GM10248 (cell line): ENCODE measurements at regions of chr18 and their contacts with region 1.

Region 1: DNA sequence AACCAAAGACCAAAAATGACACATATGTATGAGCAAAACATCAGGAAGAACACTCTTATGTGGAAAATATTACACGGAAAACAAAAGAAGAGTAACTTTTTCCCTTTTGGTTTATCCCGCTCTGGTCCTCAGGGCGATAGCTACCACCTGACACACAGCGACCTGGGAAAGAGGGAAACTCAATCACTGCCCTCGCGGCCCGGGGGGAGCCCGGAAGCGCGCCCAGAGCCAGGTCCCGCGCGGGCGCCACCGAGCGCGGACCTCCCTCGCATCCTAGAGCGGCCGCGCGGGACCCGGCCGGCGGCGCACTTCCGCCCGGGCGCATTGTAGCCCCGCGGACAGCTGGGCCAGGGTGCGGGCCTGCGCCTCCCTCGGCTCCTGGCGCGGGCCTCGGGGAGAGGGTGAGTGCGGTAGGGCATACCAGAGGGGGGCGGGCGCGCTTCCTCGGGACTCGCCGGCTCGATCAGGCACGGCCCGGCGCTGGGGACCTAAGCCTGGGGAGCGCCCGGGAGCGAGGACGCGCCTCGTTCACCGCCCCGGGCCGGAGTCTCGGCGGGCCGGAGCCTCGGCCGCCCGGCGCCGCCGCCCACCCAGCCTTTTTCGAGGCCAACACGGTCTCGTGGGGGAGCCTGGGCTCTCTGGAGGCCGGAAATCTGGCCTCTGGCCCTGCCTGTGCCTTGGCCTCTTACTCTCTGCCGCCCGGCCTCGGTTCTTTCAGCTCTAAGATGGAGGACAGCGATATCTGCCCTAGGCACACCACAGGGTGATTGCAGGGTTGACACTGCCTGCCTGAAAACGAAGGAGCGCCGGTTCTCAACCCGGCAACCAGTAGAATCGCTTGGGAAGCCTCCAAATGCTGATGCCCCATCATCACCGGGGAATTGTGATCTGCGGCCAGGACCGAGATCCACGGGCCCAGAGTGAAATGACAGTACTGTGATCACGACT is at the start of gene ELAC1:
- DNase-seq: peak; percentile 90
- CTCF ChIP-seq: no peak

Region 2: DNA sequence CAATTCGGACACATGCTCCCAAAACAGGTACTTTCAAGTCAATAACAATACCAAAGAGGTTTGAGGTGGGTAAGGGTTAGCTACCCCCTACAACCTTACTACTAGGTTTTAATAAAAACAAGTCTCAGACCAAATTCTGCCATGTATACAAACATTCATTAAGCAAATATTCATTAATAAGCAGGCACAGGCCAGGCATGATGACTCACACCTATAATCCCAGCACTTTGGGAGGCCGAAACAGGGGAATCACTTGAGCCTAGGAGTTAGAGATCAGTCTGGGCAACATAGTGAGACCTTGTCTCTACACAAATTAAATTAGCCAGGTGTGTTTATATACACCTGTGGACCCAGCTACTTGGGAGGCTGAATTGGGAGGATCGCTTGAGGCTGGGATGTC is 11.9 kb before region 1 on chr18:
- CTCF ChIA-PET with region 1: interaction called, 25 read pairs
- POLR2A ChIA-PET with region 1: no interaction called
- DNase-seq: no peak
- CTCF ChIP-seq: no peak

Region 3: GRCh38 chr18:51383116-51383515 is 415.1 kb after region 1 on chr18:
- CTCF ChIA-PET with region 1: no interaction called
- POLR2A ChIA-PET with region 1: no interaction called
- DNase-seq: no peak
- CTCF ChIP-seq: no peak

Region 4: DNA sequence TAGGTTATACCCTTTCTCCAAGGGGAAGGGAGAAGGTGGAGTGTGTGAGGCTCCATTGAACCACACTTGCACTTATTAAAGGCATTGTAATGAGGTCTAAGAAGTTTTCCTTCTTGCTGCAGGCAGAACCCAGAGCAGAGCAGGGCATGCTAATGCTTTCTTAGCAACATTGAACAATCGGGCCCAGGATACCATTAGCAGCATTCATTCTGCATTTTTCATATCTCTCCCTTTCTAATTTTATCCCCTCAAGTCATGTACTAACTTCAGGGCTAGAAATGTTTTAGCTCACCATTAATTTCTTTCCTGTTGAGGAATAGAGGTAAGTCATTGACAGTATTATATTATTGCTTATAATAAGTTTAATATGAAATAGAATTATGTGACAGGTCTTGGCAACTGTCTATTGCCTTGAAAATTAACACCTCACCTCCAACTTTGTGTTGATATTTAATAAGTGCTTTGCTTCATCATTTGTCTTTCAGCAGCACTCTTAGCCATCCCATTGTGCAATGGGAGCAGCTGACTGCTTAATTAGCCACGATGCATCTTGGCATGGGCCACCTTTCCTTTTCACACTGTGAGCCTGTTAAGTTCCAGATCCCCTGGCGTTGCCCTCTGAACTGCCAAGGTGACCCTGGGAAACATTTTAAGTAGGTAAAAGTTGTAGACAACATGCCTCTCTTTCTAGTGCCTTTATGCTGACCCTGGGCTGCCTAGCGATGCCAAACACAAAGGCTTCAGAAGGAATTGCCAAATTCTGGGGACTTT is 530.3 kb after region 1 on chr18:
- CTCF ChIA-PET with region 1: no interaction called
- POLR2A ChIA-PET with region 1: no interaction called
- DNase-seq: no peak
- CTCF ChIP-seq: no peak